ENCODE measurements at regions of chr7 and their contacts with region 1.

Region 1: DNA sequence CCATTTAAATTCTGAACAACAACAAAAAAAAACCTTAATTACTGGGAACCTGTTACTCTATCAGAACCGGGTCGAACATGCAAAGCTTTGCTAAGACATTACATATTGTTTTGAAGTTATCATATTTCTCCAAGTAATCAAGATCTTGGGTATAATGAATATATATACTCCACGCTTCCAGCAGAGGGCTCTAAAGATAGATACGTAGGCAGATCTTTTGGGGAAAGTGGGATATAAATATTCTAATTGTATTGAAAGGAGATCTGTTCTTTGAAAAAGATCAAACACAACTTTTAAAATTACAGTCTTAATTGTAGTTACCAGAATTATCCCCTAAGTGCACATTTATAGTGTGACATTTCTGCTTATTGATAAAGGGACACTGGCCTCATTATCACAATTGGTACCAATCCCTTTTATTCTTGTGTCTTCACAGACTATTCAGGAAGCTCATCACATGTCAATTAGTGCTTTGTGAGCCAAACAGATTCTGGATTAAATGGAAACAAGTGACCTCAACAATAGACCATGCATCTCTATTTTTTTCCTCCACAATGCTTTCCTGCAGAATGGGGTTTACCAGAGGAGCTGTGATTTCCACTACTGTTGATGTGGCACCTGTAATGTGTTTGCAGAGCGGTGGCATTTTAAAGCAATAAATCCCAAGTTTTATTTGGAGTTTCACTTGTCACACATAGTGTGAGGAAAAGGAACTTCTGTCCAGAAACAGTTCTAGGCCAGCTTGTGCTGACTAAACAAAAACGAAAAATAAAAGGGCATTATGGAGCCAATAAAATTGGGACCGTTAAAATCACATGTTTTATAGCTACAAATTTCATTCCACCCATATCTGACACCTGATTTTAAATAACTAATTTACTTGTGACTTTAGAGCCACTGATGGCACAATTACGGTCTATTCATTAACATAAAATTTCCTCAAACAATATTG is 122.4 kb downstream of the CTTNBP2 start:
- DNase-seq: peak; percentile 66
- H3K4me3 ChIP-seq: no peak overlapping the region
- H3K27ac ChIP-seq: no peak overlapping the region
- H3K4me1 ChIP-seq: peaks cover 15% of the 10 kb centered on the region
- H3K27me3 ChIP-seq: no peaks in the 10 kb centered on the region
- CTCF ChIP-seq: peak; percentile 74

Region 2: DNA sequence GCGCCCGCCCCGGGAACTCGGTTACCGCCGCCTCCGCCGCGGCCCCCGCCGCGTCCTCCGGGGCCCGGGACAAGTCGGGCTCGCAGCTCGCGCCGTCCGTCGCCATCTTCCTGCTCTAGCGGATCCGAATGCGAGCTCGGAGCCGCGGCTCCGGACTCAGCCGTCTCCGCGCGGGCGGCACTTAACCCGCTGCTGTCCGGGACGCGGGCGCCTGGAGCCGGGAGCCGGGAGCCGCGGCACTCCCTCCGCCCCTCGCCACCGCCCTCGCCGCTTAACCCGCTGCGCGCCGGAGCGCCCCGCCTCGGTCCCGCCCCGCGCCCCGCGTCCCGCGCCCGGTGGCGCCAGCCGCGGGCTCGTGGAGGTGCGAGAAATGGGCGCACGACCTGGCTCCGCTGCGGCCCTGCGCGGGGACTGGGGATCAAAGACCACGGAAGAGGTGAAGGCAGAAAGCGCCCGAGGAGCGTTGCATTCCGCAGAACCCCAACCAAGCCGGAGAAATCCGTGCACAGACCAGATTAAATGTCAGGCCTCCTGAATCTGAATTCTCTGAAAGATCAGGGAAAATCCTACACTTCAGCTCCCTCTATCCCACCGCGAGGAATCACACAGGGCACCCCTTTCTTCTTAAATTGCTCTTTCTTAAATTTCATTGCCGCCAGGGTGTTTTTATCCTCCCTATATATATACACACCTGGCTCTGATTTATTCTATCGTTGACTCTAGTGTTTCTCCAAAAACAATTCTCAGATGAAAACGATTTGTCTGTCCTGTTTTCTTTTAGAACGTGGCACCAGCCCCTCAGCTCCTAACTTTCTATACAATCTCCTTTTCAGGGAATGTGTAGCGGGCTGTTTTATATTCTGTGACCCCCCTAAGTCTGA is 122.7 kb after region 1 on chr7 and contains the start of gene CTTNBP2:
- CTCF ChIA-PET with region 1: no interaction called
- POLR2A ChIA-PET with region 1: no interaction called
- intact Hi-C with region 1: loop called (anchors 2 kb)
- DNase-seq: peak; percentile 65
- H3K4me3 ChIP-seq: peak within 1 kb of the TSS; percentile 85
- H3K27ac ChIP-seq: peak within 1 kb of the TSS; percentile 85
- H3K4me1 ChIP-seq: peaks cover 59% of the 10 kb centered on the region
- H3K27me3 ChIP-seq: no peaks in the 10 kb centered on the region
- CTCF ChIP-seq: peak; percentile 16; the same call in 1 of the 2 replicates
- total RNA-seq, gene CTTNBP2: 21.8 and 26.3 TPM in 2 replicates

Region 3: DNA sequence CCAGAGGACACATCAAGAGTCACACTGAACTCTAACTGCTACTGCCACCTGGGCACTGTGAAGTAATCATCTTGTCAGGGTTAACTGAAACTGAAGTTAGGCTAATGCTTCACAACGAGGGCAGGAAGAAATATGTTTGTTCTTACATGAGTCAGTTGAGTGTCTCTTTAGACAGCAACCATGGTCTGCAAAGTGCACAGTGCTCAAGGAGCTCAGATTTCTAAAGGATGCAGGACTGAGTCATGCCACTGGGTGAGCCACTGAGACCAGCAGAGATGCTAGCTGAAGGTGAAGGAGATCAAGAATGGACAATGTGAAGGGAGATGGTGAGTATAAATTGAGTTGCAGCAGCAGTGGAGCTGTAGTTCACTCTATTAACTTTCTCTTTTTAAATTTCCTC is 198.3 kb after region 1 on chr7:
- CTCF ChIA-PET with region 1: no interaction called
- POLR2A ChIA-PET with region 1: no interaction called
- intact Hi-C with region 1: loop called (anchors 10 kb)
- DNase-seq: no peak
- H3K4me3 ChIP-seq: no peak overlapping the region
- H3K27ac ChIP-seq: no peak overlapping the region
- H3K4me1 ChIP-seq: no peaks in the 10 kb centered on the region
- H3K27me3 ChIP-seq: no peaks in the 10 kb centered on the region
- CTCF ChIP-seq: 0 out of 2 replicates have a peak, but pooled peaks have one; percentile 17

Region 4: GRCh38 chr7:118104812-118105441 is 354.0 kb after region 1 on chr7:
- CTCF ChIA-PET with region 1: interaction called, 3 read pairs
- POLR2A ChIA-PET with region 1: no interaction called
- intact Hi-C with region 1: loop called (anchors 2 kb)
- DNase-seq: peak; percentile 68
- H3K4me3 ChIP-seq: no peak overlapping the region
- H3K27ac ChIP-seq: no peak overlapping the region
- H3K4me1 ChIP-seq: peaks cover 21% of the 10 kb centered on the region
- H3K27me3 ChIP-seq: no peaks in the 10 kb centered on the region
- CTCF ChIP-seq: peak; percentile 79

Region 5: DNA sequence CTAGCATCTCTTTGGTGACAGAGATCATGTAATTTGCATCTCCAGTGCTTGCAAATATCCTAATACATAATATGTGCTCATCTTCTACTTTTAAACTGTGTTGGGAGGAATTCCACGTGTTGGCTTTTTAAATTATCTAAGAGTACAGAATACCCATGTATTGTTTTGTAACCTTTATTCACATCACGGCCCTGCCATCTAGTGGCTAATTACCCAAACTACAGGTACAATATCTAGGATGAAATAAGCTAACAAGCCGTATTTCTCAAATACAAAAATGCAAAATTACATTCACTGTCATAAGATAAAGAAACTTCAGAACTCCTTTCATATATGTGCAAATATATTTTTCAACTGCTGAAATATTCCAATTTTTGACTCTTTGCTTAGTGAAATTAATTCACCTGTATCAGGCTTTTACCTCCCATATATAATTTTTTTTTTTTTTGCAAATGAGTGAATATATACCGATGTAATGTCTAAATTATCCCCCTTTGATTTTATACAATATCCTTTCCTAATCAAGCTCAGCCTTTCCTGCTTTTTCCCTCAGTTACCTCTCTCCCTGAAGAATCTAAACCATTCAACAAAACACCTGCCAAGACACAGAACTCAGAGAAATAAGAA is 402.8 kb after region 1 on chr7:
- CTCF ChIA-PET with region 1: interaction called, 5 read pairs
- POLR2A ChIA-PET with region 1: no interaction called
- intact Hi-C with region 1: loop called (anchors 2 kb)
- DNase-seq: peak; percentile 77
- H3K4me3 ChIP-seq: no peak overlapping the region
- H3K27ac ChIP-seq: no peak overlapping the region
- H3K4me1 ChIP-seq: peaks cover 15% of the 10 kb centered on the region
- H3K27me3 ChIP-seq: no peaks in the 10 kb centered on the region
- CTCF ChIP-seq: peak; percentile 79

Region 6: GRCh38 chr7:118195837-118196474 is 445.1 kb after region 1 on chr7:
- CTCF ChIA-PET with region 1: no interaction called
- POLR2A ChIA-PET with region 1: no interaction called
- intact Hi-C with region 1: loop called (anchors 5 kb)
- DNase-seq: peak; percentile 77
- H3K4me3 ChIP-seq: no peak overlapping the region
- H3K27ac ChIP-seq: no peak overlapping the region
- H3K4me1 ChIP-seq: peaks cover 2% of the 10 kb centered on the region
- H3K27me3 ChIP-seq: no peaks in the 10 kb centered on the region
- CTCF ChIP-seq: peak; percentile 87